Activated T-helper 1 cell treated with anti-CD3 and anti-CD28 coated beads, Interleukin-12 subunit alpha, Interleukin-12 subunit beta, Interleukin-2, Interleukin-4 antibody, amounts not matched to agents 30 ng/mL and 10 ng/mL and 1 ng/mL, durations not matched to agents 14 hours and 24 hours and 36 hours (primary cell): ENCODE measurements at regions of chr9 and their contacts with region 1.

Region 1: DNA sequence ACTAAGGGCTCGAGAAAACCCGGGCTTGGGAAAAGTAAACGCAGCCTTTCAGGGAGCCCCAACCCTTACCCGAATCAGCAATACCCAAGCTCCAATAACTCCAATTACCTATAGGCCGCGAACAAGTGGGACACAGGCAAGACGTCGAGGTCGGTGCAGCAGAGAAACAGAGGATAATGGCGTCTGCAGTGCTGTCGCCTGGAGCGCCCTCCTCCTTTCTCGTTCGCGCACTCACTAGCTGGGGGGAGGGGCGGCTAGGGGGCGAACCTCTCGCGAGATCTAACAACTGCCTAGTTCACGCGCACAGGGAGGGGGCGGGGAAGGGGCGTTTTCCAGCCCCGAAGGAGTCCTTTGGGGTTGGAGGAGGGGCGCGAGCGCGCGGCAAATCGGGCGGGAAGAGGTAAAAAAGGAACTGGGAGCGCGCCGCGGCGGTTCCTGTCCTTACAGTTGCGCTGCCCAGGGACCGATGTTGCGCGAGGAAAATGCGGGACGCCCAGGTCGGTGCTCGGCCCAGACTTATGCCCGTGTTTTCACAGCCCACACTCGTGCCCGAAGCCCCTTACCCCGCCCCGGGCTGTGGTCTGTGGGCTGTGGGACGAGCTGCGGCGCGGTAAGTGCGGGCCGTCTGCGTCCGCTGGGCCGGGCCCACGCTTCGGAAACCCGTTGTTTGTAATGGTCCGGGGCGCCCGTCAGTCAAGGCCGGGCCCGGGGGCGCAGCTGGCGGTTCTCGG is at the start of gene RMI1:
- DNase-seq: peak; percentile 96
- H3K4me3 Mint-ChIP-seq: peak within 1 kb of the TSS; percentile 95
- H3K27ac Mint-ChIP-seq: peak within 1 kb of the TSS; percentile 100
- H3K4me1 Mint-ChIP-seq: peaks cover 51% of the 10 kb centered on the region
- H3K27me3 Mint-ChIP-seq: peaks cover 2% of the 10 kb centered on the region
- total RNA-seq, gene RMI1: 25.6 and 27.4 TPM in 2 replicates

Region 2: DNA sequence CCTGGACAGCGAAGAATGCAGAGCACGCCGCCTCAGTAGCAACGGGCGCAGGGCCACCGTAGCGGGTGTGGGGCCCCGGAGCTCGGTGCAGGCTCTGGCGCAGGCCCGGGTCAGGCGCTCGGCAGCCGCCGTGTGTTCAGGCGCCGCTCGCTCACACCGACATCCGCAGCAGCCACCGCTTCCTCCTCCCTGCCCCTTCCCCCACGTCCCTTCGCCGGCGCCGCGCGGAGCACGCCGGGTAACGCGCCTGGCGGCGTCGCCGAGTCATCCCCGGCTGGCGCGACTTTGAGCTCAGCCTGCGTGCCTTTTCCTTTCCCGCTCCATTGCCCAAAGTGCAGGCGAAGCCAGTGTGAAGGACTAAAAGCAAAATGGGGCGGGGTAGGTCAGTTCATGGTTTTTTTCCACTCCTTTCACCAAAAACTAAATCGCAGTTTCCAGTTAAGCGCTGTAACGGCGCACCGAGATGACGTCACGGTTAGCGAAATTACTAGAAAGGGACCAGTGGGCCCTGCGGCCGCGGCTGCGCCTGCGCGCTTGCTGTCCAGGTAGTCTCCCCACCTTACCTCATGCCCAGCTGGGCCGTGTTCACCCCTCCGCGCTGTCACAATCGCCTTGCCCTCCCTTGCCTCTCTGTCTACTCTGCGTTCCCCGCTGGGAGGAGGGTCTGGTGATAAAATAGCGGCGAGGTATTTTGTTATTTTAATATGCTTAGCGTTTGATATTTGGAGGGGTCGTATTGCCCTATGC is 272.6 kb before region 1 on chr9 and contains the start of gene UBQLN1:
- intact Hi-C with region 1: loop called (anchors 1 kb)
- DNase-seq: peak; percentile 89
- H3K4me3 Mint-ChIP-seq: peak within 1 kb of the TSS; percentile 87
- H3K27ac Mint-ChIP-seq: peak within 1 kb of the TSS; percentile 96
- H3K4me1 Mint-ChIP-seq: peaks cover 36% of the 10 kb centered on the region
- H3K27me3 Mint-ChIP-seq: no peaks in the 10 kb centered on the region
- total RNA-seq, gene UBQLN1: 142 and 143 TPM in 2 replicates

Region 3: DNA sequence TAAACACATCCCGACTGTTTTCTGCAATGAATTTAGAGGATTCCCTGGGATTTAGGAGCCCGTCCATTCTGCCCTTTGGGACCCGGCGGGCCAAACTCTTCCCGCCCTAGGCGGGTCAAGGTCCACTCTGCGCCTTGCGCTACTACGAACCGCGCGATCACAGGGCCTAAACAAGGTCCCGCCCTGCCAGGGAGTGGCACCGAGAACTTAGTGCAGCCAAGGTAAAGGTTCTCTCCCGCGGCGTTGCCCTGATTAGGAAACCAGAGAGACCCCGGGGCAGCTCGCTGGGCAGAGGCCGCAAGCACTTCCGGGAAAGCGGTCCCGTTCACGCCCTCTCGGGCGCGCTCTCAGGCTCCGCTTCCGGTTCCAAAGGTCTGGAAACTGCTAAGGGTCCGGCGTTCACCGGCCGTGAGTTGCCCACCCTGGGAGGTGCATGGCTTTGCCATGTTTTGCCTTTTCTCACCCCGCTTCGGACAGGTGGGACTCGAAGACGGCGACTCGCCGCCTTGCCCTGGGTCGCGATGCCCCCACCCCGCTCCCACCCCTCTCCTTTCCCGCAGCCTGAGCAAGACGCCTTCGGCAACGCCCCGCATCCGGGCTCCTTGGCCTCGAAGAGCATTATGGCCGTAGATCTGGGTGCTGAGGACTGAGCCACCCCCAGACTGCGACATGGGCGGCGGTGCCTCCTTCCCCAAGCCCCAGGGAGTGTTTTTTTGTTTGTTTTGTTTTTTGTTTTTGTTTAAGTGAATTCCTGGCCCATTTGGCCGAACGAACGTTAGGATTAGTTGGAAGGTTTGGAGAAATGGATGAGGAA is 23.9 kb before region 1 on chr9:
- intact Hi-C with region 1: loop called (anchors 1 kb)
- DNase-seq: peak; percentile 64
- H3K4me3 Mint-ChIP-seq: peak overlapping the region; percentile 92
- H3K27ac Mint-ChIP-seq: peak overlapping the region; percentile 94
- H3K4me1 Mint-ChIP-seq: peaks cover 17% of the 10 kb centered on the region
- H3K27me3 Mint-ChIP-seq: no peaks in the 10 kb centered on the region

Region 4: GRCh38 chr9:83992421-83992820 is 11.9 kb after region 1 on chr9:
- intact Hi-C with region 1: no loop called
- DNase-seq: no peak
- H3K4me3 Mint-ChIP-seq: no peak overlapping the region
- H3K27ac Mint-ChIP-seq: no peak overlapping the region
- H3K4me1 Mint-ChIP-seq: peaks cover 41% of the 10 kb centered on the region
- H3K27me3 Mint-ChIP-seq: no peaks in the 10 kb centered on the region

Region 5: DNA sequence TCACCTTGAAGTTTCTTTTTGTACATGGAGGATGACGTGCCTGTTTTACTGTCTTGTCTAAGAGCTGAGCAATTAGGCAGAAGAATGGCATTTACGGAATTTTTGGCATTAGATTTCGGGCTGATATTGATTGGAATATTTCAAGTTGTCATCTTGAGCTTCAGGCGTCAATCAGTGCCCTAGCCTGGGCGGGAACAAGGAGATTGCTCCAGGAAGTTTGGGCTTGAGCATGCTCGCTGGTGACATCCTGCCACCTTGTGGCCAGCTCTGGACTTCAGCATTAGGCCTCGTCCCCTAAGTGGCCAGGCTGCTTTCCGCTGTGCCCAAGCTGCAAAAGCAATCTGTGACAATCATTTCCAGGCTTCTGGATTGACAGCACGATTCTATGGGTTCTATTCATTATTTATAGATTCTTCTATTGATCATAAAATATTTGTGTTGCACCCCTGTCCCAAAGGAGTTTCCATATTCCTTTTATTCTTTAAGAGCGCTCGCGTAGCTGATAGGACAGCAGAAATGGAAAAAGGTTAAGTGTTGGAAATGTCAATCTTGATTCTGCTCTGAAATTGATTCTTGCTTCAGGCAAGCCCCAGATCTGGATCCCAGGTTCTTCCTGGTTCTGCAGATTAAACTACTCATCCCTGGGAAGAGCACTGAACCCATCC is 280.7 kb after region 1 on chr9:
- intact Hi-C with region 1: loop called (anchors 2 kb)
- DNase-seq: peak; percentile 33
- H3K4me3 Mint-ChIP-seq: no peak overlapping the region
- H3K27ac Mint-ChIP-seq: no peak overlapping the region
- H3K4me1 Mint-ChIP-seq: peaks cover 21% of the 10 kb centered on the region
- H3K27me3 Mint-ChIP-seq: no peaks in the 10 kb centered on the region

Region 6: DNA sequence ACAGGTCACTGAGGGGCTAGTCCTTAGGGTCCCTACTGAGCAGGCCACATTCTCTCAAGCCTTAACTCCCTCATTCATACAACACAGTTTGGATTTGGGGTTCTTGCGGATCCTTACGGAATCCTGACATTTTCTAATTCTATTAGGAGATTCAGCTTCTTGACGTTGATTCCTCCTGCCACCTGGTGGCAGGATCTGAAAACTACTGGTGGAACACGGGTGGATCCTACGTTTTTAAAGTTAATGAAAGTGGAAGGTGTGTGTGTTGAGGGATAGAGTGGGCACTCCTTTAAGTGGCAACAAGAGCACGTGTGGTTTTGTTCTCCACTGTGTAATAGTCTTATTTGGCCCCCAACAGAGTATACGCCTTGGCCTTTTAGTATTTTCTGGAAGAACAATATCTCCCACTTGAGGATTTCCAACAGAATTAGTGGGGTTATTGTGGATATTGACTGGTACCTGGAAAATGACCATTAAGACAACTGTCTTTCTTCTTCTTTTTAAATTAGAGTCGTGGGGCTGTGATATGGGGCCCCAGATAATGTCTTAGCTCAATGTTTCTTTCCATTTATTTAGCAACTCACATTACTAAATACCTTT is 334.8 kb after region 1 on chr9:
- intact Hi-C with region 1: loop called (anchors 2 kb)
- DNase-seq: peak; percentile 46
- H3K4me3 Mint-ChIP-seq: no peak overlapping the region
- H3K27ac Mint-ChIP-seq: peak overlapping the region; percentile 15
- H3K4me1 Mint-ChIP-seq: peaks cover 41% of the 10 kb centered on the region
- H3K27me3 Mint-ChIP-seq: no peaks in the 10 kb centered on the region

Region 7: DNA sequence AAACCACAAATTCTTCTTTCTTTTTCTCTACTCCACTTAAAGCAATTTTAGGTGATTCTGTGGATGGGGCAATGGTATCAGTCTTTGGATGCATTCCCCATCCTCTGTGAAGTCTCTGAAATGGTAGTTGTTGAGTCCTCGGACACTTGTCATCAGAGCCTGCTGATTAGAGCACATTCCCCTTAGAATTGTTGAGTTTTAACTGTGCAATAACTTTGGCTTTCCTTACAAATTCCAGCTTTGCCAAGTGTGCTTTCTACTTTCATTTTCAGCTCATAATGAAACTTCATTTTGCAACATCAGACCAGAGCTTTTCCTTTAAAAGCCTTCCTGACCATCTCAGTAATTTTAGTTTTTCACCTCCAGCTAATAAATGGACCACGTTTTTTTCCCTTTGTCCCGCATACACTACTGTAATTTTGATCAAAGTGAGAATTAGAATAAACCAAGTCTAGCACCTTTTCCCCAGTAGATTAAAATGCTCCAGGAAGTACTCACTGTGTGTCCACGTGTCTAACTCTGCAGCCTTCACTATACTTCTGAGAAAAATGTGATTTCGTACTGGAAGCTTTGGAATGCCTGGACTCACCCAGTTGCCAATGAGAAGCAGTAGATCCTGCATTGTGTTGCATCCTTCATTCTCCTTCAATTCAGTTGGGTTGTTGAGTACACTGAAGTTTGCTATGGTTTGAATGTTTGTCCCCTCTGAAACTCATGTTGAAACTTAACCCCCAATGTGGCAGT is 824.6 kb after region 1 on chr9:
- intact Hi-C with region 1: no loop called
- DNase-seq: no peak
- H3K4me3 Mint-ChIP-seq: no peak overlapping the region
- H3K27ac Mint-ChIP-seq: no peak overlapping the region
- H3K4me1 Mint-ChIP-seq: no peaks in the 10 kb centered on the region
- H3K27me3 Mint-ChIP-seq: peaks cover 4% of the 10 kb centered on the region

Region 8: GRCh38 chr9:85741875-85742629 is 1761.5 kb after region 1 on chr9 and contains the start of gene AGTPBP1:
- intact Hi-C with region 1: loop called (anchors 1 kb)
- DNase-seq: peak; percentile 94
- H3K4me3 Mint-ChIP-seq: peak within 1 kb of the TSS; percentile 98
- H3K27ac Mint-ChIP-seq: peak within 1 kb of the TSS; percentile 95
- H3K4me1 Mint-ChIP-seq: peaks cover 37% of the 10 kb centered on the region
- H3K27me3 Mint-ChIP-seq: peaks cover 7% of the 10 kb centered on the region
- total RNA-seq, gene AGTPBP1: 23.5 and 26.2 TPM in 2 replicates